Gastrocnemius medialis (tissue), 4 donors: ENCODE measurements at regions of chr9 and their contacts with region 1.

Region 1: GRCh38 chr9:72271613-72272478 is 93.2 kb downstream of the ZFAND5 start:
- DNase-seq: peak in 1 of 2 donors; percentile 15
- ATAC-seq: peak; percentile 69 to 73
- H3K4me3 ChIP-seq: no peak overlapping the region
- H3K27ac ChIP-seq: no peak overlapping the region
- H3K4me1 ChIP-seq: no peaks in the 10 kb centered on the region
- H3K27me3 ChIP-seq: no peaks in the 10 kb centered on the region
- CTCF ChIP-seq: peak; percentile 72 to 90 (median 75)
- POLR2A ChIP-seq: no peak

Region 2: GRCh38 chr9:71783120-71783530 is 488.7 kb before region 1 on chr9:
- in situ Hi-C with region 1: loop called in 1 of 4 experiments (anchors 25 kb)
- intact Hi-C with region 1: no loop called
- DNase-seq: peak in 1 of 2 donors; percentile 18
- ATAC-seq: peak in 1 of 2 donors; percentile 19
- H3K4me3 ChIP-seq: no peak overlapping the region
- H3K27ac ChIP-seq: no peak overlapping the region
- H3K4me1 ChIP-seq: no peaks in the 10 kb centered on the region
- H3K27me3 ChIP-seq: no peaks in the 10 kb centered on the region
- CTCF ChIP-seq: no peak
- POLR2A ChIP-seq: no peak

Region 3: GRCh38 chr9:72827950-72828731 is 556.3 kb after region 1 on chr9:
- in situ Hi-C with region 1: loop called in 2 of 4 experiments (anchors 5 to 10 kb)
- intact Hi-C with region 1: no loop called
- DNase-seq: no peak
- ATAC-seq: no peak
- H3K4me3 ChIP-seq: no peak overlapping the region
- H3K27ac ChIP-seq: peak overlapping the region in 3 of 4 donors; percentile 14 to 27 (median 27)
- H3K4me1 ChIP-seq: peaks cover 0 to 3% of the 10 kb centered on the region in 2 donors
- H3K27me3 ChIP-seq: no peaks in the 10 kb centered on the region
- CTCF ChIP-seq: no peak
- POLR2A ChIP-seq: no peak